Dendritic cell treated with granulocyte-macrophage colony-stimulating factor and Interleukin-4, amounts not matched to agents 40 ng/mL and 50 ng/mL, for 4 days (primary cell): ENCODE measurements at regions of chr11 and their contacts with region 1.

Region 1: GRCh38 chr11:59598961-59599360 is 16.6 kb downstream of the OSBP start:
- H3K4me3 Mint-ChIP-seq: no peak overlapping the region
- H3K27ac Mint-ChIP-seq: no peak overlapping the region
- H3K4me1 Mint-ChIP-seq: peaks cover 3% of the 10 kb centered on the region
- H3K27me3 Mint-ChIP-seq: no peaks in the 10 kb centered on the region

Region 2: GRCh38 chr11:59647245-59647980 is 48.5 kb after region 1 on chr11:
- intact Hi-C with region 1: loop called (anchors 5 kb)
- H3K4me3 Mint-ChIP-seq: no peak overlapping the region
- H3K27ac Mint-ChIP-seq: no peak overlapping the region
- H3K4me1 Mint-ChIP-seq: no peaks in the 10 kb centered on the region
- H3K27me3 Mint-ChIP-seq: no peaks in the 10 kb centered on the region